ENCODE measurements at regions of chr17 and their contacts with region 1.

Region 1: DNA sequence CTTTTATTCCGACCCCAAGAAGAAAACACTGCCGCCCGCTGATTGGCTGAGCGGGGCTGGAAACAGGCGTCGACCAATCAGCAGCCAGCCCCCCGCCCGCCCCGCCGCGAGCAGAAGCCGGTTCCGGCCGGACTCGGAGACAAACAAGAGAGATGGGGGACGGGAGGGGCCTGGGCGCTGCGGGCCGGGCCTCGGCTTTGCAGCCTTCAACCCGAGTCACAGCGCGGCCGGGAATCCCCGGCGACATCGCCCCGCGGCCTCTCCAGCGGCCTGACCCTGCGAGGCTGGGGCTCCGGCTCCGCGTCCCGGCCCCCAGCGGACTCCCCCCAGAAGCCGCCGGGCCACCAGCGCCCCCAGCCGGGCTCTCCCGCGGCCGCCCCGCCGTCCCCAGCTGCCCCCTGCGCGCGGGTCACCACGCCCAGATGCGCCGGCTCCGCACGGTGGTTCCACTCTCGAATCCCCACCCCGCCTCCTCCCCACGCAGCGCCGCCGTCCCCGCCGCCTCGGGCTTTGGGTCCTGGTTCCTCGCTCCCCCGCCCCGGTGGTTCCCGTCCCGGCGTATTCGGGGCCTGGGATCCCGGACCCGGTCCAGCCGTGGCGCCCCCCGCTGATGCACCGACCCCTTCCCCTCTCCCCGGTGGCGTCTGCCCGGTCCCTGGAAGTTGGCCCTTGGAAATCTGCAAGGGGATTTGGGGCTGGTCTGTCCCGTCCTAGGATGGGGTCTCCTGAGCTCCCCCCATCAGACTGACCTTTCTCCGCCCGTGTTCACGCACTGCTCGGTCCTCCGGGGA is 417 bp upstream of the SLC43A2 start:
- DNase-seq: peak; percentile 81
- ATAC-seq: peak; percentile 77
- H3K4me3 ChIP-seq: peak overlapping the region; percentile 73
- H3K27ac ChIP-seq: peak overlapping the region; percentile 51
- H3K4me1 ChIP-seq: no peaks in the 10 kb centered on the region
- H3K27me3 ChIP-seq: no peaks in the 10 kb centered on the region
- CTCF ChIP-seq: peak; percentile 28; the same call in 1 of the 2 replicates

Region 2: DNA sequence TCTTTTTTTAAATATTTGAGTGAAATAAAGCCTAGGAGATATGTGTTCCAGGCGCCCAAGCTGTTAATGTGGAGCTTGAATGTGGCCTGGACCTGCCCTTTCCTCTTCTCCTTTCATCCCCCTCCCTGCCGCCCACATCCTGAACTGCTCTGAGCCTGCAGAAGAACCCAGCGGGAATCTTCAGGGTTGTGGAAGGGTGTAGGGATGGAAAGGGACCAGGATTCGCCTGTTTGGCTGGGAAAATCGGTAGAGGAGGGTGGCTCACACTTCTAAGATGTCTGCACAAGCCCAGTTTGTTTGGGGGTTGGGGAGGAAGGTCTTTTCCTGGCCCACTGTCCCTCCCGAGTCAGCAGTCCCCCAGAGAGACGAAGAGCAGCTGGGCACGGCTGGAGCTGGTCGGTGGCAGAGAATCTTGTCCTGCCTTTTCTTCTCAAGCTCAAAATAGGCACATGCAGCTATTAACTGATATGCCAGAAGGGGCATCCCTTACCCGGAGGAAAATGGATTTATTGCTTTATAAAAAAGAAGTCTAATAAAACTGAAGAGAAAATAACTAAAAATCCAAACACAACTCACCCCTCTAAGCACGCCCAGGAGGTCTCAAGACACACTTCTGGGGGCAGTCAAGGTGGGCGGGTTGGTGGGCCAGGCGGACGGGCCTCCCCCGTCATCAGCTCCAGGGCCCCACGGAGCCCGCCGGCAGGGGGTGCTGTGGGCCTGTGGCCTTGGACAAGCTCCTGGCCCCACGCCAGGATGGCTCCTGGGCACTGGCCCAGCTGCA is 54.9 kb before region 1 on chr17:
- CTCF ChIA-PET with region 1: interaction called, 34 read pairs
- POLR2A ChIA-PET with region 1: no interaction called
- intact Hi-C with region 1: loop called (anchors 1 kb)
- DNase-seq: peak; percentile 78
- ATAC-seq: peak; percentile 57
- H3K4me3 ChIP-seq: no peak overlapping the region
- H3K27ac ChIP-seq: no peak overlapping the region
- H3K4me1 ChIP-seq: peaks cover 10% of the 10 kb centered on the region
- H3K27me3 ChIP-seq: no peaks in the 10 kb centered on the region
- CTCF ChIP-seq: peak; percentile 78

Region 3: GRCh38 chr17:1607970-1608317 is 21.1 kb before region 1 on chr17:
- CTCF ChIA-PET with region 1: no interaction called
- POLR2A ChIA-PET with region 1: interaction called, 16 read pairs
- intact Hi-C with region 1: no loop called
- DNase-seq: no peak
- ATAC-seq: no peak
- H3K4me3 ChIP-seq: no peak overlapping the region
- H3K27ac ChIP-seq: no peak overlapping the region
- H3K4me1 ChIP-seq: no peaks in the 10 kb centered on the region
- H3K27me3 ChIP-seq: no peaks in the 10 kb centered on the region
- CTCF ChIP-seq: no peak

Region 4: GRCh38 chr17:1908699-1909309 is 279.8 kb after region 1 on chr17:
- CTCF ChIA-PET with region 1: no interaction called
- POLR2A ChIA-PET with region 1: no interaction called
- intact Hi-C with region 1: no loop called
- DNase-seq: peak; percentile 78
- ATAC-seq: peak; percentile 96
- H3K4me3 ChIP-seq: peak overlapping the region; percentile 64
- H3K27ac ChIP-seq: no peak overlapping the region
- H3K4me1 ChIP-seq: peaks cover 8% of the 10 kb centered on the region; the same call in 1 of the 2 replicates
- H3K27me3 ChIP-seq: no peaks in the 10 kb centered on the region
- CTCF ChIP-seq: peak; percentile 85